ENCODE measurements at regions of chr7 and their contacts with region 1.

Region 1: DNA sequence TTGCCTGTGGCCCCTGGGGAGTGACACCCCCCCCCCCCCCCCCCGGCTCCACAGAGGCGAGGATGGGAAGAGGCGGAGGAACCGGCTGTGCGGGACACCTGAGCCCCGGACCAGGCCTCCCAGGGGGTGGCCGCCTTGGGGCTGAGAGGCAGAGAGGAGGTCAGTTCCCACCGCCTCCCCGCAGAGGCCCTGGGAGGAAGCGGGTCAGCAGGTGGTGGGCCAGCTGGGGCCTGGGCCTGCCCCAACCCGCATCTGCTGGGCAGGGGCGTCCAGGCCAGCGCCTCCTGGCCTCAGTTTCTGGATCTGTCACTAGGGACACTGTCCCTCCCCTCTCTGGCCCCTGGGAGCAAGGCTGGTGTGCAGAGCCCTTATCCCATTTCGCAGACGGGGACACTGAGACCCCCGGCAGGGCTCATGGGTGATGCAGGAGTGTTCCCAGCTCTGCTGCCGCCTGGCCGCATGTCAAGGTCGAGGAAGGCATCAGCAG is 14.6 kb upstream of the LFNG start:
- DNase-seq: no peak
- ATAC-seq: no peak

Region 2: GRCh38 chr7:2460188-2460587 is 44.7 kb before region 1 on chr7:
- intact Hi-C with region 1: loop called (anchors 1 kb)
- DNase-seq: no peak
- ATAC-seq: no peak